Common myeloid progenitor, CD34-positive (primary cell): ENCODE measurements at regions of chr7 and their contacts with region 1.

Region 1: GRCh38 chr7:18345641-18346234 is 149.8 kb upstream of the HDAC9 start:
- DNase-seq: peak; percentile 69 to 78 (median 73)
- H3K4me3 ChIP-seq: no peak overlapping the region
- H3K27ac ChIP-seq: no peak overlapping the region
- H3K4me1 ChIP-seq: peaks cover 0 to 3% (median 0%) of the 10 kb centered on the region in 4 experiments
- H3K27me3 ChIP-seq: no peaks in the 10 kb centered on the region

Region 2: GRCh38 chr7:17769918-17770317 is 575.8 kb before region 1 on chr7:
- CTCF ChIA-PET with region 1: interaction called, 10 read pairs
- POLR2A ChIA-PET with region 1: no interaction called
- DNase-seq: peak; percentile 74 to 89 (median 89)
- H3K4me3 ChIP-seq: no peak overlapping the region
- H3K27ac ChIP-seq: no peak overlapping the region
- H3K4me1 ChIP-seq: peaks cover 3 to 21% (median 7%) of the 10 kb centered on the region in 4 experiments
- H3K27me3 ChIP-seq: no peaks in the 10 kb centered on the region

Region 3: GRCh38 chr7:18213652-18214051 is 132.1 kb before region 1 on chr7:
- CTCF ChIA-PET with region 1: interaction called, 33 read pairs
- POLR2A ChIA-PET with region 1: no interaction called
- DNase-seq: no peak
- H3K4me3 ChIP-seq: no peak overlapping the region
- H3K27ac ChIP-seq: no peak overlapping the region
- H3K4me1 ChIP-seq: no peaks in the 10 kb centered on the region
- H3K27me3 ChIP-seq: no peaks in the 10 kb centered on the region

Region 4: DNA sequence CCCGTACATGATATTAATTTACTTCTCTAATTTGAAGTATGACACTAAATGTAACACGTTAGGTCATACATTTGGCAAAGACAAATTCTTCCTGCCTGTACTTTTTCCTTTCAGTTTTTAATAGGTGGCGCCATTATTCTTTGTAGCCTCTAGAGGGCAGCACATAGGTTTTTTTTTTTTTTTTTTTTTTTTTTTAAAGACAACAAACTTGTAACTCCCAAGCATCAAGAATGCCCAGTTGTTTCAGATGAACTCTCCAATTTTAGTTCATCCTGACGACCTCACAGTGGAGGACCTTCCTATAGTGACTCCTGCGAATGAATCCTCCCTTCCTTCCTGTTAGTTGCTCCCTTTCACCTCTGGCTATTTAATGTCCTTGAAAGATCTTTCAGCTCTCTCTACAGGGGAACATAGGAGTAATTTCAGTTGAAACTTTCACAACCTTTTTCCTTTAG is 10.5 kb after region 1 on chr7:
- CTCF ChIA-PET with region 1: no interaction called
- POLR2A ChIA-PET with region 1: no interaction called
- DNase-seq: peak; percentile 59 to 78 (median 78)
- H3K4me3 ChIP-seq: peak overlapping the region in 1 of 7 experiments; percentile 55
- H3K27ac ChIP-seq: no peak overlapping the region
- H3K4me1 ChIP-seq: peaks cover 0 to 14% (median 1%) of the 10 kb centered on the region in 4 experiments
- H3K27me3 ChIP-seq: no peaks in the 10 kb centered on the region